ENCODE measurements at regions of chr1 and their contacts with region 1.

Region 1: DNA sequence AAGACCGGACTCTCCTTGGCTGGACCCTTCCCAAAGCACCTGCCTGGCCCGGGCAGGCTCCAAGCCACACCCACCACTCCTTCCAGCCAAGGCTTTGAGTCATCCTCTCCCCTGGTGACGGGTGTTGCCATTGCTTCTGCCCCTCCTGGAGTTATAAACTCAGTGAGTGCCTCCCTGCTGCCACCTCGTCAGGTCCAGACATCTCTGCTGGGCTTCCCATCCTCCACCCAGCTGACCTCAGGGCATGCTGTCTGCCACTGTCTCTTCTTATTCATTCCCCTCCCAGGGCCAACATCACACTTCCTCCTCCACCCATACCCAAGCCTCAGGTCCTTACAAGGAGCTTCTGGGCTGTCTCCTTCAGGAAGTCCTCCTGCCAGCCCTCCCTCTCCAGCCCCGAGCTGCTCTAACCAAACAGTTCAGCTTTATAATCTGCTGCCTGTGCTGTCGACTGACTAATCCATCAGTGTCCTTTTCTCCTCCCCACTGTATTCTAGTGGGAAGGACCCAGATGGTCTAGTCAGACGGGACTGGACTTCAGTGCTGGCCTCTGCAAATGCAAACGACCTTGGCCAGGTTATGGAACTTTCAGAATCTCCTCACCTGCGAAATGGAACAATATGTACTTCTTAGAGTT is 1.8 kb upstream of the CLSTN1 start:
- DNase-seq: peak; percentile 58
- ATAC-seq: peak; percentile 57
- H3K4me3 Mint-ChIP-seq: peak overlapping the region; percentile 71
- H3K27ac Mint-ChIP-seq: no peak overlapping the region
- H3K4me1 Mint-ChIP-seq: peaks cover 42% of the 10 kb centered on the region
- H3K27me3 Mint-ChIP-seq: peaks cover 35% of the 10 kb centered on the region
- CTCF ChIP-seq: no peak

Region 2: DNA sequence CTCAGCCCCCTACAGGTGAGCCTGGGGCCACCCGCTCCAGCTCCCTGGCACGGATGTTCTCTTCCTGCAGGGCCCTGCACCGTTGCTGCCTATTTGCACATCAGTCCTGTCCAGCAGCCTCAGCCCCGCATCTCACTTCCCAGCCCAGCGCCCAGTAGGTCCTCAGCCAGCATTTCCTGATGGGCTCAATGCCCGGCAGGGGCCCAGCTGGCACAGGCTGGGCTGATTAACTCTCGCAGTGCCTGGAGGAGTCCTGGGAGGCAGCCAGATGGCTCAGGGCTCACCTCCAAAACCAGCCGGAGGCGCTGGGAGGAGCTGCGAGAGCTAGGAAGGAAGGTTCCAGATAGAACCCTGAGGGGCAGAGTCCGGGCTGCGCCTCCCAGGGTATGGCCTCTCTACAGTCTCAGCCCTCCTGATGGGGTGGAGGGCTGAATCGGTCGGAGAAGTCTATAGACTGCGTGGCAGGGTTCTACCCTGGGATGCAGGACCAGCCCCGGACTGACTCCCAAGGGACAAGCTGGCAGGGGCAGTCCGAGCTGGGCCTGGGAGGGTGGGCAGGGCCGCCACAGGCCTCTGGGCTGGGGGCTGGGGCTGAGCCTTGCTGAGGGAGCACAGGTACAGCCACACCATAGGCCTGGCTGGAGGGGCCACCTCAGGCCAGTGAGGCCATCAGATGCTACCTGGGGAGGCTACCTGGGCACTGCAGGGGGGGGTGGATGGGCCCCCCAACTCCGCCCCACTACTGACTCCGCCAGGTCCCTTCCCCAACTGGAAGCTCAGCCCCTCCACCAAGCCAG is 17.4 kb after region 1 on chr1:
- CTCF ChIA-PET with region 1: interaction called, 30 read pairs
- POLR2A ChIA-PET with region 1: no interaction called
- DNase-seq: no peak
- ATAC-seq: peak; percentile 46
- H3K4me3 Mint-ChIP-seq: no peak overlapping the region
- H3K27ac Mint-ChIP-seq: no peak overlapping the region
- H3K4me1 Mint-ChIP-seq: peaks cover 18% of the 10 kb centered on the region
- H3K27me3 Mint-ChIP-seq: no peaks in the 10 kb centered on the region; the same call in 1 of the 2 replicates
- CTCF ChIP-seq: no peak

Region 3: DNA sequence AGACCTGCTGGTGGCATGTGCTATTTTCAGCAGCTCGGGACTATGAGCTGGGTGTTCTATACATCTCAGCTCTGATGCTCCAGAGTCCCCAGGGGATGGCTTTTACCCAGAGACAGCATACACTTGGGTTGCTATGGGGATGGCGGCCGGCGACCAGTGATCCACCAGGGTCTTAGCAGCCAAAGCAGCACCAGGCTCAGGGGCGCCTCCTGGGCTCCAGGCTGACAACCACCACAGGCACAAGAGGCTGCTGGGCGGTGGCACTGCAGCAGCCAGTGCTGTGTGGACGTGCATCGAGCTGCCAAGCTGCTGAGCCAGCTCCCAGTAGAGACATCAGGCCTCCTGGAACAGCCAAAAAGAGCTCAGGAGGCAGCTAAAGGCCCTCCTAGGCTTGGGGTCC is 35.8 kb after region 1 on chr1:
- CTCF ChIA-PET with region 1: interaction called, 33 read pairs
- POLR2A ChIA-PET with region 1: no interaction called
- DNase-seq: peak; percentile 55
- ATAC-seq: peak; percentile 62
- H3K4me3 Mint-ChIP-seq: no peak overlapping the region
- H3K27ac Mint-ChIP-seq: peak overlapping the region; percentile 57; the same call in 1 of the 2 replicates
- H3K4me1 Mint-ChIP-seq: peaks cover 19% of the 10 kb centered on the region
- H3K27me3 Mint-ChIP-seq: no peaks in the 10 kb centered on the region
- CTCF ChIP-seq: no peak

Region 4: DNA sequence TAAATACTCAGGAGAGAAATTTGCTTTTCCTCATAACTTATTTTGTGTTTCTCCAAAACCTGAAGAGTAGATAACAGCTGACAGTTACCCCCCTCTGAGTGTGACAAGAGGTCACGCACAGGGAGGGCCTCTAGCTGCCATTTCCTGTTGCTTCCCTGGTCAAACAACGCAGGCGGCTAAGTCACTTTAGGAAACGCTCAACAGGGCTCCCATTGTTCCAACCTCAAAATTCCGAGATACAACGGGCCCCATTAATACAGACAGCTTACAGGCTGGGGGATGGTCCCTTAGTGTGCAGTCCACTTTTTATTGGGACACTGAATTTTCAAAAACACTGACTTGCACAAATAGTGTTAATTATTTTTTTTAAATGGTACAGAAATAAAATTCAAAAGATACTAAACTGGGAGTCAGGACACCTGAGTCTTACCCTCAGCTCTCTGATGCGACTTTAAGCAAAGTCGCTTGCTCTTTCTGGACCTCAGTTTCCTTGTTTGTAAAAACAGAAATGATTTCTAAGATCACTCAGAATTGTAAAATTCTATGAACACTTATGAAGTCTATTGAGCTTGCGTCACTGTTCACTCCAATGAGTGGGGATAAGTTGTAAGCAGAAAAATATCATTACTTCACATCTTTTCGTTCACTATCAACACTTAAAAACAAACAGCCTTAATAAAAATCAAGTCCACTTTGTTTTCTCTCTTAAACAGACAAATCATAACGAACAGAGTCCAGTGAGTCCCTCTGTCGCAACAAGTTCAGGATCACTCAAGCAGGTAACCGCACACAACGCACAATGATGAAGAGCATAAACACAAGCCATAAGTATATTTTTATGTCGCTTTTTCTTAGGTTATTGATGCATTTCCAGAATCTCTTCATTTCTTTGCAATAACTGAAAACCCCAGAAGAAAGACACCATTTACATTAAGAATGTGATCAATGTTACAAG is 104.1 kb after region 1 on chr1:
- CTCF ChIA-PET with region 1: interaction called, 4 read pairs
- POLR2A ChIA-PET with region 1: interaction called, 10 read pairs
- DNase-seq: peak; percentile 41
- ATAC-seq: peak; percentile 93
- H3K4me3 Mint-ChIP-seq: peak overlapping the region; percentile 29; the same call in 1 of the 2 replicates
- H3K27ac Mint-ChIP-seq: peak overlapping the region; percentile 97
- H3K4me1 Mint-ChIP-seq: peaks cover 42% of the 10 kb centered on the region
- H3K27me3 Mint-ChIP-seq: no peaks in the 10 kb centered on the region
- CTCF ChIP-seq: no peak

Measured in WTC11 (cell line).